ENCODE measurements at regions of chr5 and their contacts with region 1.

Region 1: DNA sequence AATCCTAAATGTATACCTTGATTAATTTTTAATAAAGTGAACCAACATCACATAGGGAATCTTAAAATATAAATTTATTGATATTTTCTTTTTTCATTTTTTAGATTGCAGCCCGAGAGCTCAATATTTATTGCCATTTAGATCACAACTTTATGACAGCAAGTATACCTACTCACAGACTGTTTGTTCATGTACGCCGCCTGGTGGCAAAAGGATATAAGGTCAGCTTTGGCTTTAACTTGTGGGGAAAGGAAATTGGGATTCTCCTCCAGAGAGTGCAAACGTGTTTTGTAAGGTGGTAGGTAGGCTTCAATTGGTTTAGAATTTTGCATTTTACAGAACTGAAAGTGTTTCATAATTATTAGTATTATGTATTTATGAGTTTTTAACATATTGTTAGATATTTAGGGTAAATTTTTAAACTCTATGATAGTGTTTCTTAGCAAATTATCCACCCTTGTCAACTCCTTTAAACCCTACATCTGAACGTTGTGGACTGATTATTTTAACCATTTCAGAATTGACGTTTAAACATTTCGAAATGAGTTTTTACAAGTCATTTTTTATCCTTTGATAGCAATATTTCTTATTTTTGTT is 17.5 kb upstream of the DHFR start:
- DNase-seq: peak; percentile 67 to 82 (median 70)
- ATAC-seq: peak; percentile 40 to 58 (median 48)
- H3K4me3 ChIP-seq: no peak overlapping the region
- H3K27ac ChIP-seq: no peak overlapping the region
- H3K4me1 ChIP-seq: peaks cover 0 to 20% (median 10%) of the 10 kb centered on the region in 4 donors
- H3K27me3 ChIP-seq: no peaks in the 10 kb centered on the region
- CTCF ChIP-seq: peak; percentile 77 to 91 (median 90)
- POLR2A ChIP-seq: no peak

Region 2: DNA sequence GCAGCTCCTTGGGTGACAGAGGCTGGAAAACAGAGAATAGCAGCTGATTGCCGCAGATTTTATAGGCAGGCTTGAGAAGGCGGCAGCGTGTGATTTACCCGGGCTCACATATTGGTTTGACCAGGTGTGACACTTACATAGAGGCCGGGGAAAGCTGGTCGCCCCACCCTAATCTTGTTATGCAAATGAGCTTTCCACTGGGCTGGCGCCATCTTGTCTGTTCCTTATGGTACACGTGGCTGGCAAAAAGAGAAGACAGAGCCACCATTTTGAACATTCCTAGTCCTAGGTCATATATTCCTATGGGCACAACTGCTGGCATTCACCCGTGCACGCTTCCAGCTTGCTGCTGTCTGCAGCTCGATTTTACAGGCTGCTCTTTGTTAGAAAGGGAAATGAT is 363.7 kb before region 1 on chr5:
- intact Hi-C with region 1: no loop called
- DNase-seq: no peak
- ATAC-seq: no peak
- H3K4me3 ChIP-seq: no peak overlapping the region
- H3K27ac ChIP-seq: no peak overlapping the region
- H3K4me1 ChIP-seq: no peaks in the 10 kb centered on the region
- H3K27me3 ChIP-seq: no peaks in the 10 kb centered on the region
- CTCF ChIP-seq: no peak
- POLR2A ChIP-seq: no peak

Region 3: DNA sequence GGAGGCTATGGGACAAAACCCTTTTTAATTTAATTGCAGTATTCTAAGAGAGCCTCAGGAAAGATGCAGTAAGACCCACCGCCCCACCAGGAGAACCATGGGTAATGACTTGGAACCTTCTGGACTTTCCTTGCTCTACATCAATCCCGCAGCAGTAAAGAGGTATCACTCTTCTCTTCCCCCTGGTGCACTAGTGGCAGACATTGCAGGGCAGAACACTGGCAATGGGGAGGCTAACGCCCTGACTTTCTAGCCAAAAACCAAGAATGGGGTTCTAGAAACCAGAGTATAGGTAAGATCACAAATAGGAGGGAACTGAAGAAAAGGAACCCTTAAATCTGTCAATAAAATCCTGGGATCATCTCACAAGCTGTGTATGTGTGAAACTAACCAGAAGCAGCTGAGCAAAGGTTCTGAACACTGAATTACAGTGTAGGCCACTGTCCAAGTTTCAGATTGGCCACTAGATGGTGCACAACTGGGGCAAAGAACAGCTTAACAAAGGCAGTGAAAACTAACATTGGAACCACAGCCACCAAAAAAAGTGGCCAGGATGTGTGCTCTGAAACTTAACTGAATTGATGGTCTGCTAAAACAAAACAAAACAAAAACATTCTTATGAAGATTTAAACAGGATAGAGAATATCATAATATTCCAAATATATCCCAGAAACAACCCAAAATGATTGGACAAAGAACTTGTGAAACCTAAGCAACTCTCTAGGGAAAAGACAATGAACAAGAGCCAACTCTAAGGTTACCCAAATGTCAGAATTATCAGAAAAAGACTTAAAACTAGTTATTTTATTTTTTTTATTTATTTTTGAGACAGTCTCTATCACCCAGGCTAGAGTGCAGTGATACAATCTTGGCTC is 191.0 kb before region 1 on chr5:
- intact Hi-C with region 1: loop called in 1 of 2 experiments (anchors 5 kb)
- DNase-seq: peak in 1 of 3 donors; percentile 66
- ATAC-seq: peak; percentile 98 to 99 (median 98)
- H3K4me3 ChIP-seq: no peak overlapping the region
- H3K27ac ChIP-seq: peak overlapping the region in 1 of 3 donors; percentile 12
- H3K4me1 ChIP-seq: no peaks in the 10 kb centered on the region
- H3K27me3 ChIP-seq: no peaks in the 10 kb centered on the region
- CTCF ChIP-seq: peak; percentile 76 to 83 (median 80)
- POLR2A ChIP-seq: no peak